ENCODE measurements at regions of chr6 and their contacts with region 1.

Region 1: DNA sequence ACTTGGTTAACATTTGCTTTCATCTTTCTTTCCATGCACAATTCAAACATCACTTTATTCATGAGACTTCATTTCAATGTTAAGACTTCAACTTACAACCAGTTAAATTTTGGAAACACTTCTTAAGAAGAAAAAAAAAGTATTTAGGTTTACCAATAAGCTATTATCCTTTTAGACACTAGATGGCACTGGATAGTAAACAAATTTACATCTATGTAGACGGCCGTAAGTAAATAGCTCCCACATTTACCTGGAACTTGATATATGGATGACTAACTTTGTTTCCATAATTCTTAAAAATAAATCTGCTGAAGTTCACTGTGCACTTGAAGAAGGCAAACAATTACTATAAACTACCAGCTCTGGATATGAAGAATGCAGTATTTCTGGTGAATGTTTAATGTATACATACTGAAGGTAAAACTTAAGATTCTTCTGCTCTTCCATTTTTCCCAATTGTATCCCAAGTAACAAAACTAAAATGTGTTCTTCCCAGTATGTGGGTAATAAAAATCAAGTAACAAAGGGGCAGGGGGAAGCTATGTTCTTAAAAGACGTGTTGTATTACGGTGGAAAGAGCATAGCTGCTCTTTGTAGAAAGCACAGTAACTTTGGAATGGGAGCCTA is 130.6 kb upstream of the C6orf118 start:
- DNase-seq: no peak
- ATAC-seq: no peak
- H3K4me3 ChIP-seq: no peak overlapping the region
- H3K27ac ChIP-seq: no peak overlapping the region
- H3K4me1 ChIP-seq: no peaks in the 10 kb centered on the region
- H3K27me3 ChIP-seq: no peaks in the 10 kb centered on the region
- CTCF ChIP-seq: peak in 3 of 5 experiments; percentile 41 to 61 (median 57)
- POLR2A ChIP-seq: no peak

Region 2: GRCh38 chr6:165167861-165168260 is 272.2 kb before region 1 on chr6:
- in situ Hi-C with region 1: no loop called
- intact Hi-C with region 1: no loop called
- DNase-seq: no peak
- ATAC-seq: no peak
- H3K4me3 ChIP-seq: no peak overlapping the region
- H3K27ac ChIP-seq: no peak overlapping the region
- H3K4me1 ChIP-seq: no peaks in the 10 kb centered on the region
- H3K27me3 ChIP-seq: no peaks in the 10 kb centered on the region
- CTCF ChIP-seq: no peak
- POLR2A ChIP-seq: no peak

Region 3: DNA sequence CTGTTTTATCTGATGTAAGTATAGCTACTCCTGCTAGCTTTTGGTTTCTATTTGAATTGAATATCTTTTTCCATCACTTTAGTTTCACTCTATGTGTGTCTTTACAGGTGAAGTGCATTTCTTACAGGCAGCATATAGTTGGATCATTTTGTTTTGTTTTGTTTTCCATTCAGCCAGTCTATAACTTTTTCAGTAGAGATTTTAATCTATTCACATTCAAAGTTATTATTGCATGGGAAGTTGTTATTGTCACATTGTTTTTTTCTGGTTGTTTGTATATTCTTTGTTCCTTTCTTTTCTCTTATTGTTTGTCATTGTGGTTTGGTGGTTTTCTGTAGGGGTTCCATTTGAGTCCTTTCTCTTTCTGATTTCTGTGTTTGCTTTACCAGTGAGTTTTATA is 71.8 kb after region 1 on chr6:
- in situ Hi-C with region 1: no loop called
- intact Hi-C with region 1: no loop called
- DNase-seq: no peak
- ATAC-seq: no peak
- H3K4me3 ChIP-seq: no peak overlapping the region
- H3K27ac ChIP-seq: no peak overlapping the region
- H3K4me1 ChIP-seq: no peaks in the 10 kb centered on the region
- H3K27me3 ChIP-seq: no peaks in the 10 kb centered on the region
- CTCF ChIP-seq: no peak
- POLR2A ChIP-seq: no peak

Region 4: DNA sequence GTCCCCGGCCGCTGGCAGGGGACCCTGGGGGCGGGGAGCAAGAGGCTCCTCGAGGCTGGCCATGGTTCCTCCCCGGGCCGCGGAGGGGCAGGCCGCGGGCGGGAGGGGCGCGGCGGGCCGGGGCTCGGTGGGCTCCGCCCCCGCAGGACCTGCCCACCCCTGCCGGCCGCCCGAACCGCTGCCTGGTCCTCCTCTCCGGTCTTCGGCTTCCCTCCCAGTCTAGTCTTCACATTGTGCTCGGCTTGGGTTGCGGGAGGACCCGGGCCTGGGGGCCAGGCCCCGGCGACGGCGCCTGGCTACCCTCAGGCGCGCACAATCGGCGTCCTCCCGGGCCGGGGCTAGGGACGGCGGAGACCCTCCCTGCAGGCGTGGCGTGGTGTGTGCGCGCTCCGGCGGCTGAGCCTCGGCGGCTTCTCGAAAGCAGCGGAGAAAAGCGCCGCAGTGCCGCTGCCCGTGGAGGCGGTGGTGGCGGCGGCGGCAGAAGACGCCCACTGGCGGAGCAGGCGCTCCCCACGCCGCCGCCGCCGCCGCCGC is 222.8 kb after region 1 on chr6 and contains the start of gene PDE10A:
- in situ Hi-C with region 1: no loop called
- intact Hi-C with region 1: loop called (anchors 5 kb)
- DNase-seq: no peak
- ATAC-seq: peak; percentile 48 to 50
- H3K4me3 ChIP-seq: peak within 1 kb of the TSS; percentile 62 to 63 (median 62)
- H3K27ac ChIP-seq: peak within 1 kb of the TSS; percentile 49 to 62 (median 53)
- H3K4me1 ChIP-seq: peaks cover 17 to 31% of the 10 kb centered on the region in 2 donors
- H3K27me3 ChIP-seq: peaks cover 41 to 62% (median 61%) of the 10 kb centered on the region in 3 donors
- CTCF ChIP-seq: no peak
- POLR2A ChIP-seq: no peak
- total RNA-seq, gene PDE10A: 0.24 to 1.5 (median 1.2) TPM

Region 5: DNA sequence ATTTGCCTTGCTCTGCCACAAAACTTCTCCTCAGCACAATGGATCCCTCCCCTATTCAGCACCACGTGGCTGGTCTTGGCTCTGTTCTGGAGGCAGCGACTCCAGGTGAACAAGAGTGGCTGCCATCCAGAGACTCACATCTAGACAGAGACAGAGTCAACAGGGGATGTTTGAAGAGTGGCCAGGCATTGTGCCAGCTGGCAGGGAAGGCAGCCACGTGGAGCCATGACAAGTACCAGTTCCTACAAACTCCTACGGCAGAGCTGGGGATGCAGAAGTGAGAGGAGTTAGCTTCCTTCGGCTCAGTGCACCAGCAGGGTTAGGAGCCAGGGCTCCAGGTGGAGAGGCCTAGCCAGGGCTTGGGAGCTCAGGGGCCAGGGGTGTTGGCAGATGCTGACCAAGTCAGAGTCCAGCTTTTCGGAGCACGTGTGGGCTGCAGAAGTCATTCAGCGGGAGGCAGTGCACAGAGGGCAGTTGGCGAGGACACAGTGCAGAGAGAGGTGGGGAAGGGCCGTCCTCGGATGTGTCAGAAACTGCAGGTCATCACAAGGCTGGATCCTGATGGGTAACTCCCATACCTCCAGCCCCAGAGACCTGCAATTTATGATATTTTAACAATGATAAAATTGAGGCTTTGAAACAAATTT is 394.7 kb after region 1 on chr6:
- in situ Hi-C with region 1: loop called in 1 of 4 experiments (anchors 25 kb)
- intact Hi-C with region 1: no loop called
- DNase-seq: no peak
- ATAC-seq: no peak
- H3K4me3 ChIP-seq: no peak overlapping the region
- H3K27ac ChIP-seq: no peak overlapping the region
- H3K4me1 ChIP-seq: no peaks in the 10 kb centered on the region
- H3K27me3 ChIP-seq: no peaks in the 10 kb centered on the region
- CTCF ChIP-seq: no peak
- POLR2A ChIP-seq: no peak

Region 6: DNA sequence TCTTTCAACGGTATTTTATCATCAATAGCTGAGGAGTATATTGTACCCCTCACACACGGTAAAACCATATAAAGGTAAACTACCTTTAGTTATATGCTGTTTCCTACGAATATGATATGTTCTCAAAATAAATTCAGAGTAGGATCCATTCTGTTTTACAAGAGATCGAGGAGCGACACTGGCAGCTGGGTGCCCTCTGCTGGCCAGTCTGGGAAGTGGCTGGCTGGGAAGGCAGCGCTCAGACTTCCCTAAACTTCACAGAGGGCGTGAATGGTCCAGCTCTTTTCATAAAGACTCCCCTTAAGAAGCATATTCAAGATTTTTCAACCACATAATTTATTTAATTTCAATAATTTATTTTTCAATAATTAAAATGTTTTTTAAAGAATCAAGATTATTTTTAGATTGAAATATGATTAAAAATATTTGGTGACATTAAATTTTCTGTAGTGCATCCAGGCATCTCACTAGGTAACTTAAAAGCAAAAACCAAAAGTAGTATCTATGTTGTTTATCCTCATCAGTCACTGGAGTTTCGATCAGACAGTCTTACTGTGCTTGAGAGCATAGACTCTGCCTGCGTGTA is 410.5 kb after region 1 on chr6:
- in situ Hi-C with region 1: loop called (anchors 5 to 25 kb)
- intact Hi-C with region 1: loop called (anchors 1 kb)
- DNase-seq: peak in 1 of 2 donors; percentile 32
- ATAC-seq: peak in 1 of 2 donors; percentile 47
- H3K4me3 ChIP-seq: peak overlapping the region in 1 of 4 donors; percentile 20
- H3K27ac ChIP-seq: no peak overlapping the region
- H3K4me1 ChIP-seq: no peaks in the 10 kb centered on the region
- H3K27me3 ChIP-seq: peaks cover 14 to 17% (median 14%) of the 10 kb centered on the region in 3 donors
- CTCF ChIP-seq: peak; percentile 56 to 91 (median 73)
- POLR2A ChIP-seq: no peak

Region 7: GRCh38 chr6:166106076-166106686 is 666.1 kb after region 1 on chr6:
- in situ Hi-C with region 1: loop called in 1 of 4 experiments (anchors 25 kb)
- intact Hi-C with region 1: no loop called
- DNase-seq: peak in 1 of 2 donors; percentile 20
- ATAC-seq: no peak
- H3K4me3 ChIP-seq: no peak overlapping the region
- H3K27ac ChIP-seq: no peak overlapping the region
- H3K4me1 ChIP-seq: no peaks in the 10 kb centered on the region
- H3K27me3 ChIP-seq: peaks cover 0 to 7% (median 3%) of the 10 kb centered on the region in 3 donors
- CTCF ChIP-seq: peak; percentile 30 to 66 (median 63)
- POLR2A ChIP-seq: no peak